ENCODE measurements at regions of chr3 and their contacts with region 1.

Region 1: GRCh38 chr3:161104561-161105551 is at the start of gene B3GALNT1:
- DNase-seq: peak; percentile 51 to 56
- H3K4me3 ChIP-seq: peak within 1 kb of the TSS; percentile 68
- H3K4me3 Mint-ChIP-seq: peak within 1 kb of the TSS; percentile 75
- H3K27ac Mint-ChIP-seq: peak within 1 kb of the TSS; percentile 6
- H3K4me1 ChIP-seq: peaks cover 19% of the 10 kb centered on the region
- H3K4me1 Mint-ChIP-seq: peaks cover 7% of the 10 kb centered on the region
- H3K27me3 ChIP-seq: no peaks in the 10 kb centered on the region
- H3K27me3 Mint-ChIP-seq: no peaks in the 10 kb centered on the region
- CTCF ChIP-seq: no peak
- total RNA-seq, gene B3GALNT1: 8.2 and 9.0 TPM in 2 replicates

Region 2: DNA sequence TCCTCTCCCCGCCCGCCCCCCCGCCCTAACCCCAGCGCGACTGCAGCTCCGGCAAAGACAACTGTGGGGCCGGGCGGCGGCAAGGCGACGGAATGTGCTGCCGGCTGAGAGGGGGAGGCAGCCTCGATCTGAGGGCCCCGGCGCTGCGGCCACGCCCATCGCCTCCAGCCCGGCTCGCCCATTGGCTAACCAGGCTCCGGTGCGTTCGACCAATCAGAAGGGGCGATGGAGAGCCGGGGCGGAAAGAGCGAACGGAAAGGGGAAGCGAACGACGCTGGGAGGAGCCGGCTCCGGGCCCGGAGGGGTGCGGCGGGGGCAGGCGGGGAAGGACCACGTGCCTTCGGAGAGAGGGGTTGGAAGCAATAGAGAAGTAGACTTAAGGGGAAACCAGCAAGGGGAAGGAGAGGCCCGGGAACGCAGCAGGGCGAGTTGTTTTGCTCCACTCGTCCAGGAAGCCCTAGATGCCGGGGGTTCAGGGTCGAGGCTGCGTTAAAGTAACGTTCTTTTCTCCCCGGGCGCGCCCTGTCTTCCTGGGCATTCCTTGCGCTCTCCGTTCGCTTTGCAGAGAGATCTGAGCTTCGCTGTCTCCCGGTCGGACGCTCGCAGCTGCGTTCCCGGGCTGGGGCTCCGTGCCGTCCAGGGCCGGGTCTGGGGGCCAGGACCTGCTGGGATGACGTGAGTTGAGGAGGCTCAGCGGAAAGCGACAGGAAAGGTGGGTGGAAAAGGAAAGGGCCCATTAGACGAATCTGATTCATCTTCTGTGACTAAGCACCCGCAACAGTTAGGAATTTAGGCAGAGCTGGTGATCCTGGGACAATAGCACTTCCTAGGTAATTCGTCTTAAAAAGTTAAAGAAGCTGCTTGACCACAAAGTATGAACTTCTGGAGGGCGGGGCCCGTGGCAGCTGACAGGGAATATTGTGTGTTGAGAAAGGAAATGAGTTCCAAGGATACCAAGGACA is 539.1 kb before region 1 on chr3 and contains the start of gene KPNA4:
- CTCF ChIA-PET with region 1: no interaction called
- POLR2A ChIA-PET with region 1: no interaction called
- intact Hi-C with region 1: loop called (anchors 10 kb)
- DNase-seq: peak; percentile 97 to 98
- H3K4me3 ChIP-seq: peak within 1 kb of the TSS; percentile 50
- H3K4me3 Mint-ChIP-seq: peak within 1 kb of the TSS; percentile 88
- H3K27ac Mint-ChIP-seq: peak within 1 kb of the TSS; percentile 90
- H3K4me1 ChIP-seq: peaks cover 6% of the 10 kb centered on the region
- H3K4me1 Mint-ChIP-seq: peaks cover 16% of the 10 kb centered on the region
- H3K27me3 ChIP-seq: no peaks in the 10 kb centered on the region
- H3K27me3 Mint-ChIP-seq: no peaks in the 10 kb centered on the region
- CTCF ChIP-seq: no peak
- total RNA-seq, gene KPNA4: 53.5 and 60.5 TPM in 2 replicates

Region 3: DNA sequence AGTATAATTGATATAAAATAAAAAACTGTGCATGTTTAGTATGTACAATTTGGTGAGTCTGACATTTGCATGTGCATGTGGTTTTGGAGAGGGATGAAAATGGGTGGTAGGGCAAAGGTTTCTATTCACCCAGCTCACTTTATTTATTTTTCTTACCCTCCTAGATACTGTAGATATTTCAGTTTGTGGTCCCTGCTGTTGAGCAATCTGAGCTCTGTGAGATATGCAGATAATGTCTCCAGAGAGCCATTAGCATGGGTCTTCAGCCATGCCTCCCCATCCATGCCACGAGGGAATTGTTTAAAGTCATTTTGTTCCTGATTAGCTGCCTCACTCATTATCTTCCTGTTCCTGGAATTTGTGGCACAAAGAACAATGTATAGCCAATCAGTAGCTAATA is 44.7 kb after region 1 on chr3:
- CTCF ChIA-PET with region 1: no interaction called
- POLR2A ChIA-PET with region 1: no interaction called
- intact Hi-C with region 1: loop called (anchors 5 kb)
- DNase-seq: no peak
- H3K4me3 ChIP-seq: no peak overlapping the region
- H3K4me3 Mint-ChIP-seq: no peak overlapping the region
- H3K27ac Mint-ChIP-seq: no peak overlapping the region
- H3K4me1 ChIP-seq: peaks cover 5% of the 10 kb centered on the region; the same call in 1 of the 2 replicates
- H3K4me1 Mint-ChIP-seq: peaks cover 17% of the 10 kb centered on the region
- H3K27me3 ChIP-seq: no peaks in the 10 kb centered on the region
- H3K27me3 Mint-ChIP-seq: no peaks in the 10 kb centered on the region
- CTCF ChIP-seq: no peak

Region 4: GRCh38 chr3:161220850-161221753 is 116.2 kb after region 1 on chr3 and contains the start of gene NMD3:
- CTCF ChIA-PET with region 1: no interaction called
- POLR2A ChIA-PET with region 1: no interaction called
- intact Hi-C with region 1: loop called (anchors 5 kb)
- DNase-seq: peak; percentile 95
- H3K4me3 ChIP-seq: peak within 1 kb of the TSS; percentile 86
- H3K4me3 Mint-ChIP-seq: peak within 1 kb of the TSS; percentile 80
- H3K27ac Mint-ChIP-seq: peak within 1 kb of the TSS; percentile 81
- H3K4me1 ChIP-seq: peaks cover 6% of the 10 kb centered on the region; the same call in 1 of the 2 replicates
- H3K4me1 Mint-ChIP-seq: peaks cover 6% of the 10 kb centered on the region
- H3K27me3 ChIP-seq: no peaks in the 10 kb centered on the region
- H3K27me3 Mint-ChIP-seq: no peaks in the 10 kb centered on the region
- CTCF ChIP-seq: no peak
- total RNA-seq, gene NMD3: 61.7 and 62.4 TPM in 2 replicates

Region 5: GRCh38 chr3:161273589-161274218 is 168.8 kb after region 1 on chr3:
- CTCF ChIA-PET with region 1: no interaction called
- POLR2A ChIA-PET with region 1: no interaction called
- intact Hi-C with region 1: loop called (anchors 2 kb)
- DNase-seq: peak in 1 of 2 experiments; percentile 26
- H3K4me3 ChIP-seq: no peak overlapping the region
- H3K4me3 Mint-ChIP-seq: no peak overlapping the region
- H3K27ac Mint-ChIP-seq: no peak overlapping the region
- H3K4me1 ChIP-seq: peaks cover 10% of the 10 kb centered on the region
- H3K4me1 Mint-ChIP-seq: peaks cover 4% of the 10 kb centered on the region
- H3K27me3 ChIP-seq: no peaks in the 10 kb centered on the region
- H3K27me3 Mint-ChIP-seq: no peaks in the 10 kb centered on the region
- CTCF ChIP-seq: peak; percentile 17 to 62

Region 6: GRCh38 chr3:161295325-161295724 is 190.5 kb after region 1 on chr3:
- CTCF ChIA-PET with region 1: no interaction called
- POLR2A ChIA-PET with region 1: no interaction called
- intact Hi-C with region 1: no loop called
- DNase-seq: no peak
- H3K4me3 ChIP-seq: no peak overlapping the region
- H3K4me3 Mint-ChIP-seq: no peak overlapping the region
- H3K27ac Mint-ChIP-seq: no peak overlapping the region
- H3K4me1 ChIP-seq: no peaks in the 10 kb centered on the region
- H3K4me1 Mint-ChIP-seq: no peaks in the 10 kb centered on the region
- H3K27me3 ChIP-seq: no peaks in the 10 kb centered on the region
- H3K27me3 Mint-ChIP-seq: no peaks in the 10 kb centered on the region
- CTCF ChIP-seq: no peak